Heart right ventricle (tissue), 16 donors: ENCODE measurements at regions of chr11 and their contacts with region 1.

Region 1: GRCh38 chr11:109405671-109406070 is 16.3 kb upstream of the C11orf87 start:
- DNase-seq: no peak
- ATAC-seq: no peak
- H3K4me3 ChIP-seq: no peak overlapping the region
- H3K27ac ChIP-seq: no peak overlapping the region
- H3K4me1 ChIP-seq: no peaks in the 10 kb centered on the region
- H3K27me3 ChIP-seq: no peaks in the 10 kb centered on the region
- CTCF ChIP-seq: no peak

Region 2: GRCh38 chr11:109208121-109208520 is 197.6 kb before region 1 on chr11:
- intact Hi-C with region 1: no loop called
- DNase-seq: no peak
- ATAC-seq: no peak
- H3K4me3 ChIP-seq: no peak overlapping the region
- H3K27ac ChIP-seq: no peak overlapping the region
- H3K4me1 ChIP-seq: no peaks in the 10 kb centered on the region
- H3K27me3 ChIP-seq: no peaks in the 10 kb centered on the region
- CTCF ChIP-seq: no peak

Region 3: DNA sequence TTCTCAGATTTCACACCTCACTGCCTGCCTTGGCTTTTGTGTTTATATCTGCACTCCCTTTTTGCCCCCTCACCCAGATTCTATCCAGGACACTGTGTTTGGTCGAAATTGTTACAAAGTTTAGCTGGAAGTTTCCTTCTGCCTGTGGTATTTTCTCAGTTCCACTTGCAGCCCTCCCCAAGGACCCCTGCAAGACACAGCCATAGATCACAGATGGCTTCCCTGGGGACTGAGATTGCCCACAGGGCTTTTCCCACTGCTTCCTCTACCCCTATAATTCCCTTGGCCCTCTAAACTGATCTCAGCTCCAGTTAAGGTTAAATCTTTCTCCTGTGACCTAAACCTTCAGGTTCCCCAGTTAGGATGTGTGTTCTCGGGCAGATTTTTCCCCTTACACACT is 129.7 kb before region 1 on chr11:
- intact Hi-C with region 1: no loop called
- DNase-seq: no peak
- ATAC-seq: no peak
- H3K4me3 ChIP-seq: no peak overlapping the region
- H3K27ac ChIP-seq: no peak overlapping the region
- H3K4me1 ChIP-seq: no peaks in the 10 kb centered on the region
- H3K27me3 ChIP-seq: no peaks in the 10 kb centered on the region
- CTCF ChIP-seq: no peak

Region 4: GRCh38 chr11:109320595-109320994 is 85.1 kb before region 1 on chr11:
- intact Hi-C with region 1: no loop called
- DNase-seq: no peak
- ATAC-seq: peak in 1 of 8 donors; percentile 25
- H3K4me3 ChIP-seq: no peak overlapping the region
- H3K27ac ChIP-seq: no peak overlapping the region
- H3K4me1 ChIP-seq: no peaks in the 10 kb centered on the region
- H3K27me3 ChIP-seq: no peaks in the 10 kb centered on the region
- CTCF ChIP-seq: no peak

Region 5: DNA sequence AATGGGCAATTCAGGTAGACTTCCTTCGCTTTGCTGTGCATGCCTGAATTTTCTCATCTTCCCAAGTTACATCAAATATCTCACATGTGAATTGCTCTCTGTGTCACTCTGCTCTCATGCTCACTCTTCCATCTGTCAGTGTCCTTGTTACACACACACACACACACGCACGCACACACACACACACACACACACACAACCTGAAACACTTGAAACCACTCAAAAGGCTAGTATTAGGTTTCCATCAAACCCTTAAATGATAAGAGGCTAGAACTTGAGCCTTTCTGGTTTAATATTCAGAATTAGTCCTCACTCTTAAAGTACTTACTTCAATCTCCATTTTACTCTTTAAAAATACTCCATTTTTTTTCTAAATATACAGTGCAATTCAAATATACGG is 298.8 kb after region 1 on chr11:
- intact Hi-C with region 1: loop called in 1 of 10 experiments (anchors 5 kb)
- DNase-seq: no peak
- ATAC-seq: no peak
- H3K4me3 ChIP-seq: no peak overlapping the region
- H3K27ac ChIP-seq: no peak overlapping the region
- H3K4me1 ChIP-seq: no peaks in the 10 kb centered on the region
- H3K27me3 ChIP-seq: no peaks in the 10 kb centered on the region
- CTCF ChIP-seq: no peak